ENCODE measurements at regions of chr10 and their contacts with region 1.

Region 1: GRCh38 chr10:28875549-28876081 is 198.3 kb downstream of the BAMBI start:
- DNase-seq: no peak
- H3K4me3 ChIP-seq: no peak overlapping the region
- H3K27ac ChIP-seq: no peak overlapping the region
- H3K4me1 ChIP-seq: peaks cover 4 to 11% of the 10 kb centered on the region in 2 donors
- H3K27me3 ChIP-seq: no peaks in the 10 kb centered on the region
- CTCF ChIP-seq: no peak

Region 2: GRCh38 chr10:28676968-28677887 is 198.4 kb before region 1 on chr10 and contains the start of gene BAMBI:
- intact Hi-C with region 1: loop called (anchors 2 kb)
- DNase-seq: peak; percentile 59 to 96
- H3K4me3 ChIP-seq: peak within 1 kb of the TSS; percentile 98 to 99
- H3K27ac ChIP-seq: peak within 1 kb of the TSS; percentile 85
- H3K4me1 ChIP-seq: peaks cover 6 to 11% of the 10 kb centered on the region in 2 donors
- H3K27me3 ChIP-seq: no peaks in the 10 kb centered on the region
- CTCF ChIP-seq: peak; percentile 61 to 85 (median 66)
- total RNA-seq, gene BAMBI: 16.3 TPM

Region 3: DNA sequence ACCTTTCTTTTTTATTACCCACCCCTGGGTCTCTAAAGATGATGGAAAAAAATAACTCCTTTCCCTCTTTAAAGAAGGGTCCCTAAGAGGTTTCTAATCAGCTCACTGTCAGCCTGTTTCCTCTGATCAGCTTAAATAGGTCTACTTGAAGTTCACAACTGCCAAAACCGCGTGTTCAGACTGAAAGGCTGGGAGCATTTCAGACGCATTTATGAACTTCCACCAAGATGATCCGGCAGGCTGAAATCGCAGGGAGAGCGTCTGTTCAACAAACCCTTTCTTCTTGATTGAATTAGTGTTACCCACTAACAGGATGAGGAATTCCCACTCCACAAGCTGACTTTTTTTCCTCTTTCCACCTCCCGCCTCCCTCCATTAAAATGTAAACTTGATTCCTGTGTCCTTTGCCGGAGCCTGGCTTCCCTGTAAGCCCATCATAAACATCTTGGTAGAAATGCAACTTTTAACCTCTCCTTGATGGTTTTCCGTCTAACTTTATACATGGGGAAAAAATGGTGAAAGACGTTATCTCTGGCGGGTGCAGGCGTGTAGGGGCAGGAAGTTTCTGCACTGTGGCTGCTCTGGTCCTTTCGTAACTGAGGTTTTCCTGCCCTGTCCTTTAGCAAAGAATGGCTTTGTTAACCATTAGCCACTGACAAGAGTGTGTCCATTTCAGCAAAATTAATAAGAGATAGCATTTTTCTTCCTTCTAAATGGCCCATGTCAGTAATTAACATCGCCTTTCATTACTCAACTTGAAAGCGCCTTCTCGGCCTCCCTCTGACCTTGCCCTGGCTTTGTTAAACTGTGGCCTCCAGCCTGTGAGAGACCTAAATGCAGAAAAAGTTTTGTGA is 67.6 kb before region 1 on chr10:
- intact Hi-C with region 1: loop called (anchors 5 kb)
- DNase-seq: no peak
- H3K4me3 ChIP-seq: peak overlapping the region; percentile 31 to 47
- H3K27ac ChIP-seq: peak overlapping the region; percentile 84 to 89
- H3K4me1 ChIP-seq: peaks cover 3 to 25% of the 10 kb centered on the region in 2 donors
- H3K27me3 ChIP-seq: no peaks in the 10 kb centered on the region
- CTCF ChIP-seq: no peak

Region 4: DNA sequence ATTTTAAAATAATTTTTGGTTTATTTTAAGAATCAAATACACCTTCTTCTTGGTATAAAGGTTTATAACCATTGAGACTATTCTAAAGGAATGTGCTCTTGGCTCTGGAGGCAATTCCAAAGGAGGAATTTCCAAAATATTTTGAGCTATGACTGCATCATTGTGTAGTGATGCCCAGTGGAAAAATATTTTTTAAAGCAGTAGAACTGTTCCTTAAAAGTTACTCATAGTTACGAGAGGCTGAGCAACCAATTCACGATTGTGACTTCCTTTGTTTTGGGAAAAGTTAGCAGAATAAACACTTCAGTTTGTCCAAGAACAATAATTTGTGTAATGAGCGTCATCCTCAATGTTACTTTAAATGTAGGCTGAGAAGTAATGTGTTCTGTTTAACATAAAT is 35.3 kb after region 1 on chr10:
- intact Hi-C with region 1: loop called (anchors 1 kb)
- DNase-seq: no peak
- H3K4me3 ChIP-seq: no peak overlapping the region
- H3K27ac ChIP-seq: peak overlapping the region; percentile 78 to 88
- H3K4me1 ChIP-seq: peaks cover 7 to 33% of the 10 kb centered on the region in 2 donors
- H3K27me3 ChIP-seq: no peaks in the 10 kb centered on the region
- CTCF ChIP-seq: no peak

Region 5: DNA sequence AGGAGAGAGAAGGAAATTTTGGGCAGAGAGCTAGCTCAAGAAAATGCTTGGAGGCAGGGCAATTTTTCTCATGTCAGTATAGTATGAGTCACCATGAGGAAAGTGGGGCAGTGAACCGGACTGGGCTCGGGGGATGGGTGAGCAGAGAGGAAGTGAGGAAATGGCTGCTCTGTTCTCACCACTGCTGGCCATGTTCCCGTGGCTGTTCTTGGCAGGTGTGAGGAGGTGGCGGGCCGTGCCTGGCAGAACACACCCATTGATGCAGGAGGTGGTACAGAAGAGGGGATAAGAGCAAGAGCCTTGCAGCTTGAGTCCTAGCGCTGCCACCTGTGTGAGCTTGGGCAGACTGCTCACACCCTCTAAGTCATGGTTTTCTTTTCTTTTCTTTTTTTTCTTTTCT is 108.8 kb after region 1 on chr10:
- intact Hi-C with region 1: loop called (anchors 2 kb)
- DNase-seq: peak; percentile 84 to 97
- H3K4me3 ChIP-seq: no peak overlapping the region
- H3K27ac ChIP-seq: peak overlapping the region; percentile 43 to 47
- H3K4me1 ChIP-seq: peaks cover 0 to 18% of the 10 kb centered on the region in 2 donors
- H3K27me3 ChIP-seq: no peaks in the 10 kb centered on the region
- CTCF ChIP-seq: no peak

Measured in ascending aorta (tissue), 2 donors.